ENCODE measurements at regions of chr1 and their contacts with region 1.

Region 1: GRCh38 chr1:185317034-185317885 is at the start of gene IVNS1ABP:
- DNase-seq: peak; percentile 98
- H3K4me3 Mint-ChIP-seq: peak within 1 kb of the TSS; percentile 85
- H3K27ac Mint-ChIP-seq: peak within 1 kb of the TSS; percentile 94
- H3K4me1 Mint-ChIP-seq: peaks cover 36% of the 10 kb centered on the region
- H3K27me3 Mint-ChIP-seq: no peaks in the 10 kb centered on the region
- CTCF ChIP-seq: no peak
- total RNA-seq, gene IVNS1ABP: 67.4 and 92.0 TPM in 2 replicates

Region 2: GRCh38 chr1:185156854-185157598 is 160.2 kb before region 1 on chr1 and contains the starts of genes SWT1 and TRMT1L:
- CTCF ChIA-PET with region 1: interaction called, 3 read pairs
- POLR2A ChIA-PET with region 1: interaction called, 38 read pairs
- intact Hi-C with region 1: loop called (anchors 5 kb)
- DNase-seq: peak; percentile 100
- H3K4me3 Mint-ChIP-seq: peak within 1 kb of the TSS; percentile 83
- H3K27ac Mint-ChIP-seq: peak within 1 kb of the TSS; percentile 98
- H3K4me1 Mint-ChIP-seq: peaks cover 40% of the 10 kb centered on the region
- H3K27me3 Mint-ChIP-seq: no peaks in the 10 kb centered on the region
- CTCF ChIP-seq: no peak
- total RNA-seq, gene SWT1: 2.1 and 6.1 TPM in 2 replicates
- total RNA-seq, gene TRMT1L: 23.4 and 29.3 TPM in 2 replicates

Region 3: DNA sequence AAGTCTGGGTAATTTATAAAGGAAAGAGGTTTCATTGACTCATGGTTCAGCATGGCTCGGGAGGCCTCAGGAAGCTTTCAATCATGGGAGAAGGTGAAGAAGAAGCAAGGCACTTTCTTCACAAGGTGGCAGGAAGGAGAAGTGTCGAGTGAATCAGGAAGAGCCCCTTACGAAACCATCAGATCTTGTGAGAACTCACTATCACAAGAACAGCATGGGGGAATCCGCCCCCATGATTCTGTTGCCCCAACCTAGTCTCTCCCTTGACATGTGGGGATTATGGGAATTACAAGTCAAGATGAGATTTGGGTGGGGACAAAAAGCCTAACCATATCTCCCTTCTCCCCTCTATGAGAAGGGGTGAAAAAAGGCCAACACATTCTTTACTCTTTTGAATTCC is 11.0 kb after region 1 on chr1:
- CTCF ChIA-PET with region 1: interaction called, 3 read pairs
- POLR2A ChIA-PET with region 1: interaction called, 16 read pairs
- intact Hi-C with region 1: no loop called
- DNase-seq: no peak
- H3K4me3 Mint-ChIP-seq: no peak overlapping the region
- H3K27ac Mint-ChIP-seq: no peak overlapping the region
- H3K4me1 Mint-ChIP-seq: no peaks in the 10 kb centered on the region
- H3K27me3 Mint-ChIP-seq: no peaks in the 10 kb centered on the region
- CTCF ChIP-seq: no peak

Region 4: GRCh38 chr1:185367218-185367617 is 50.0 kb after region 1 on chr1:
- CTCF ChIA-PET with region 1: interaction called, 3 read pairs
- POLR2A ChIA-PET with region 1: interaction called, 24 read pairs
- intact Hi-C with region 1: no loop called
- DNase-seq: no peak
- H3K4me3 Mint-ChIP-seq: no peak overlapping the region
- H3K27ac Mint-ChIP-seq: peak overlapping the region; percentile 70
- H3K4me1 Mint-ChIP-seq: peaks cover 17% of the 10 kb centered on the region
- H3K27me3 Mint-ChIP-seq: no peaks in the 10 kb centered on the region
- CTCF ChIP-seq: no peak

Region 5: GRCh38 chr1:185439727-185440415 is 122.6 kb after region 1 on chr1:
- CTCF ChIA-PET with region 1: interaction called, 5 read pairs
- POLR2A ChIA-PET with region 1: interaction called, 21 read pairs
- intact Hi-C with region 1: loop called (anchors 1 kb)
- DNase-seq: peak; percentile 95
- H3K4me3 Mint-ChIP-seq: no peak overlapping the region
- H3K27ac Mint-ChIP-seq: no peak overlapping the region
- H3K4me1 Mint-ChIP-seq: peaks cover 10% of the 10 kb centered on the region
- H3K27me3 Mint-ChIP-seq: no peaks in the 10 kb centered on the region
- CTCF ChIP-seq: no peak

Region 6: GRCh38 chr1:185636848-185637247 is 319.6 kb after region 1 on chr1:
- CTCF ChIA-PET with region 1: interaction called, 5 read pairs
- POLR2A ChIA-PET with region 1: interaction called, 11 read pairs
- intact Hi-C with region 1: no loop called
- DNase-seq: peak; percentile 33
- H3K4me3 Mint-ChIP-seq: no peak overlapping the region
- H3K27ac Mint-ChIP-seq: peak overlapping the region; percentile 63
- H3K4me1 Mint-ChIP-seq: peaks cover 29% of the 10 kb centered on the region
- H3K27me3 Mint-ChIP-seq: no peaks in the 10 kb centered on the region
- CTCF ChIP-seq: no peak

Region 7: DNA sequence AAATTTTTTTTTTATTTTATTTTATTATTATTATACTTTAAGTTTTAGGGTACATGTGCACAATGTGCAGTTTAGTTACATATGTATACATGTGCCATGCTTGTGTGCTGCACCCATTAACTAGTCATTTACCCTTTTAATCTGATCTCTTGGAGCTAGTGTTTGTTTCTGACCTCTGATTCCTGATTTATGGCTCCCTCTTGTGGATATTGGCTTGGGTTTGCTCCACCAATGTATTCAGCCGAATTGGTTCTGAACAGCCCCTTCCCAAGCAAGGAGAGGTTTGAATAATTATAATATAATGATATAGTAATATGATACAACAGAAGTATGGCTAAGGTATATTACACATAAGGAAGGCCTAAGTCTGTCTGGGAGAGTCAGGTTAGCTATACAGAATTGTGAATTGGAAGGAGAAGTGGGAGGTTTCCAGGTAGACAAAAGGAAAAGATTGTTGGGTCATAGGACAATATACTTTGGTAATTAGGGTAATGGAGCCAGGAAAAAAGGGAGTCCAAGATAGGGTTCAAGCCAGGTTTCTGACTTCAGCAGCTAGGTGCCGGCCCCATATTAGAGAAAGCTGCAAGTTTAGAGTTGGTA is 363.9 kb after region 1 on chr1:
- CTCF ChIA-PET with region 1: interaction called, 38 read pairs
- POLR2A ChIA-PET with region 1: interaction called, 36 read pairs
- intact Hi-C with region 1: no loop called
- DNase-seq: peak; percentile 81
- H3K4me3 Mint-ChIP-seq: no peak overlapping the region
- H3K27ac Mint-ChIP-seq: no peak overlapping the region
- H3K4me1 Mint-ChIP-seq: no peaks in the 10 kb centered on the region
- H3K27me3 Mint-ChIP-seq: no peaks in the 10 kb centered on the region
- CTCF ChIP-seq: peak; percentile 60

Measured in MCF 10A (cell line).